Activated CD4-positive, alpha-beta T cell treated with anti-CD3 and anti-CD28 coated beads, Interleukin-2, amount 10 ng/mL, durations not matched to agents 24 days and 14 days (primary cell): ENCODE measurements at regions of chr13 and their contacts with region 1.

Region 1: GRCh38 chr13:100392709-100393641 is 195.6 kb downstream of the GGACT start:
- DNase-seq: peak; percentile 86
- H3K4me3 Mint-ChIP-seq: peak overlapping the region; percentile 70
- H3K27ac Mint-ChIP-seq: peak overlapping the region; percentile 91
- H3K4me1 Mint-ChIP-seq: peaks cover 27% of the 10 kb centered on the region
- H3K27me3 Mint-ChIP-seq: no peaks in the 10 kb centered on the region

Region 2: GRCh38 chr13:99356158-99357091 is 1036.5 kb before region 1 on chr13:
- intact Hi-C with region 1: loop called (anchors 2 kb)
- DNase-seq: peak; percentile 94
- H3K4me3 Mint-ChIP-seq: peak overlapping the region; percentile 83
- H3K27ac Mint-ChIP-seq: peak overlapping the region; percentile 99
- H3K4me1 Mint-ChIP-seq: peaks cover 92% of the 10 kb centered on the region
- H3K27me3 Mint-ChIP-seq: no peaks in the 10 kb centered on the region

Region 3: DNA sequence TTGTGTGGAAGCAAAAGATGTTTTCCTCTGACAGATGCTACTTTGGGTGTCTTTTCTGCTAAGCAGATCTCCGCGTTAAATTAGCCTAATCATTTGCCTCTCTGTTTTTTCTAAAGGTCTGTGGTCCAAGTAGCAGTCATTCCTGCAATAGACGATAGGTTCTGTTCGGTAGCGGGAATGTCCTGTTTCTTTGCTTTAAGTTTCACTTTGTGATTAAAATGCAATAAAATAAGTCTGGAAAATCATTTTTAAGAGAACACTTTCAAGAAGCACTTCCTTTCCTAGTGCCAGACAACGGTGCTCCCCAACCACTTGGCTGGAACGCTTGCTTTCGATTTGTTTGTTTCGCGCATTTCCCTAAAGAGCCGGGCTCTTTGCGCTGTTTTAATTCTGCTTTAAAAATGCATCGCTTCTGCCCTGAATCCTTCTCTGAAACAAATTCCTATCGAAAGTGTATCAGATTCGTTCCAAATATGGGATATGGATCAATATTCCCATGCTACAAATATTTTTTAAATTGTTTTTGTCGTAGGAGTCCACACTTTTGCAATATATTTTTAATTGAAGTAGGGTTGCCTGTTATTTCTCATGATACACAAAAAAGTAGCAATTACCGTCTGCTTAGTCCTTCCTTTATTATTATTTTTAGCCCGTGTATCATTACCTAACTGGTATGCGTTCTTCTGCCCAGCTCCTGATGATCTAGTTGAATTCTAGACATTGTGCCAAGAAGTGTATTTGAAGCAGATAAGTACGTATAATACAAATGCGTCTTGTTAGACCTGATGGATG is 397.2 kb before region 1 on chr13:
- intact Hi-C with region 1: loop called (anchors 5 kb)
- DNase-seq: no peak
- H3K4me3 Mint-ChIP-seq: peak overlapping the region; percentile 51
- H3K27ac Mint-ChIP-seq: no peak overlapping the region
- H3K4me1 Mint-ChIP-seq: peaks cover 19% of the 10 kb centered on the region
- H3K27me3 Mint-ChIP-seq: peaks cover 75% of the 10 kb centered on the region

Region 4: GRCh38 chr13:100129605-100130004 is 263.4 kb before region 1 on chr13:
- intact Hi-C with region 1: loop called (anchors 2 kb)
- DNase-seq: peak; percentile 59
- H3K4me3 Mint-ChIP-seq: peak overlapping the region; percentile 8
- H3K27ac Mint-ChIP-seq: peak overlapping the region; percentile 29
- H3K4me1 Mint-ChIP-seq: peaks cover 22% of the 10 kb centered on the region
- H3K27me3 Mint-ChIP-seq: no peaks in the 10 kb centered on the region

Region 5: GRCh38 chr13:100363874-100364273 is 29.1 kb before region 1 on chr13:
- intact Hi-C with region 1: loop called (anchors 1 kb)
- DNase-seq: no peak
- H3K4me3 Mint-ChIP-seq: no peak overlapping the region
- H3K27ac Mint-ChIP-seq: no peak overlapping the region
- H3K4me1 Mint-ChIP-seq: peaks cover 8% of the 10 kb centered on the region
- H3K27me3 Mint-ChIP-seq: no peaks in the 10 kb centered on the region

Region 6: DNA sequence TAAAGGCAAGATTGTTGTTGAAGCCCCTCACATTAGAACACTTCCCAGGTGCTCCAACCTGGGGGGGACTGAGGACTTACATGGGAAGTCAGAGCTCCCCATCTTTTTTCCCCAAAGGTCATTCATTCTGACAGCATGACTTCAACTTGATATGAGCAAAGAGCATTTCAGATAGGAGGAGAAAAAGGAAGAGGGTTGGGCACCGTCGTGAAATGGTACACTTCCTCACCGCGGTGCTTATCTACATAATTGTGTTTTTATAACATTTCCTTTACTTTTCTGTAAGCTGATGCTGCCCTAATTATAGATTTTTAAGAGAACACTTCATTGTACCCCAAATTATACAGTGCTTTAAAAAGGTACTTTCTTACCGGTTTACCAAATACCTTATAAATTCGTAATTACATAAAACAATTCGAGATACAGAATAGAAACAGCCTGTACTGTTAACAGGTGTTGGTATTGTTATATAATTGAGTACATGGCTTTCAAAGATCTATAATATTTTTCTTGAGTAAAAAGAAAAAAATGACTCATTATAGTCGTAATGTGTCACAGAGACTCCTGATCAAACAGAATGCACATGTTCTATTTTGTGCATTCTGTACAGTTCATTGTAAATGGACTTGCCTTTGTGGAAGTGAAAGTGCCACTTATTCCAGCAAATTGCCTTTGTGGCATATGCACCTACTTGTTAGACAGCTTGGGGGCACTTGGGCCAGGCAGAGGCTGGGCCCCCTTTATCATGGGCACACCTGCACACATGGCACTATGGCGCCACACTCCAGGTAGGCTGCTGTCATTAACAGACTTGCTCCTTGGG is 113.8 kb after region 1 on chr13:
- intact Hi-C with region 1: loop called (anchors 1 kb)
- DNase-seq: no peak
- H3K4me3 Mint-ChIP-seq: peak overlapping the region; percentile 77
- H3K27ac Mint-ChIP-seq: peak overlapping the region; percentile 85
- H3K4me1 Mint-ChIP-seq: peaks cover 20% of the 10 kb centered on the region
- H3K27me3 Mint-ChIP-seq: peaks cover 13% of the 10 kb centered on the region